ENCODE measurements at regions of chr14 and their contacts with region 1.

Region 1: DNA sequence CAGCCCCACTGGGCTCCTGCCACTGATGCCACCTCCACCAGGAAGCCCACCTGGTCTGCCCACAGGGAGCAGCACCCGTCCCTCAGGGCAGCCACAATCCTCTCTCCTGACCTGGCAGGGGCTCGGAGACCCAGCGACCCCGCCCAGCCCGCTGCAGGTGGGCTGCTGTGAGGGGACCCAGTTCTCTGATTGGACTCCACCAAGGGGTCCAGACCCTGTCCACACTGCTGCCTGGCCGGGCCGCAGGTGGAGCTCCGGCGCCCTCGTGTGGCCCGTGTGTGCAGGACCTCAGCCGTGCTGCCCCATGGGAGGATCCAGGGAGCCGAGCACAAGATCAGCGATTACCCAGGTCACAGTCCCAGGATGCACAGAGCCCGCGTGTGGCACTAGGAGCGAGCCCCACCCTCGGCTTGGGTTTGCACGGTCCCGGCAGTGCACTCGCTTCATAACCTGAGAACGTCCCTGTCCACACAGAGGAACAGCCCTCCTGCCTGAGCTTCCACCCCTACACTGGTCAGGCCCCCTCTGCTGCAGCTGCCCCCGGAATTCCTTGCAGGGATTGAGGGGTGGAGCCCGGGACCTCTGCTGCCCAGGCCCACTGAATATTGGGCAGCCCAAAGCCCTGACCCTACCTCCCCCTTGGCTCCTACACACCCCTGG is 35.4 kb upstream of the TMEM179 start:
- DNase-seq: peak; percentile 60
- H3K4me3 Mint-ChIP-seq: no peak overlapping the region
- H3K27ac Mint-ChIP-seq: no peak overlapping the region
- H3K4me1 Mint-ChIP-seq: no peaks in the 10 kb centered on the region
- H3K27me3 Mint-ChIP-seq: peaks cover 32% of the 10 kb centered on the region
- CTCF ChIP-seq: peak; percentile 99

Region 2: GRCh38 chr14:104137297-104138097 is 502.5 kb before region 1 on chr14:
- CTCF ChIA-PET with region 1: interaction called, 6 read pairs
- POLR2A ChIA-PET with region 1: no interaction called
- intact Hi-C with region 1: loop called (anchors 1 kb)
- DNase-seq: peak; percentile 51
- H3K4me3 Mint-ChIP-seq: peak overlapping the region; percentile 43
- H3K27ac Mint-ChIP-seq: no peak overlapping the region
- H3K4me1 Mint-ChIP-seq: no peaks in the 10 kb centered on the region
- H3K27me3 Mint-ChIP-seq: peaks cover 46% of the 10 kb centered on the region
- CTCF ChIP-seq: peak; percentile 95